ENCODE measurements at regions of chr7 and their contacts with region 1.

Region 1: DNA sequence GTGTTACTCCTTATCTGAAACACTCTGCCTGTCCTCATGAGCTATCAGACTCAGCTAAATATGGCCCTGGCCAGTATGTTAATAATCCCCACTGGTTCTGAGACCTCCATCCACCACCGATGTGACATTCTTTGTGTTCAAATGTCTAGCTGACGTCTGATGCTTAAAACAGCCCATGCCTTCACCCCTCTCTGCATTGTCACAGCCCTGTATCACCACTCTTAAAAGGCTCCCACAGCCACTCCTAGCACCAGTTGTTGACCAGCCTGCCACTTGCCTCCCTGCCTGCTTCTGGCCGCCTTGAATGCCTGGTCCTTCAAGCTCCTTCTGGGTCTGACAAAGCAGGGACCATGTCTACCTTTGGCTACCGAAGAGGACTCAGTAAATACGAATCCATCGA is at the start of gene LMOD2:
- DNase-seq: no peak
- H3K4me3 ChIP-seq: no peak within 1 kb of the TSS
- H3K27ac ChIP-seq: no peak within 1 kb of the TSS
- H3K4me1 ChIP-seq: peaks cover 4% of the 10 kb centered on the region
- H3K27me3 ChIP-seq: peaks cover 0 to 2% of the 10 kb centered on the region in 2 experiments
- CTCF ChIP-seq: no peak
- POLR2A ChIP-seq: no peak
- total RNA-seq, gene LMOD2: not detected in 2 replicates

Region 2: GRCh38 chr7:123674399-123675180 is 19.0 kb after region 1 on chr7:
- CTCF ChIA-PET with region 1: interaction called, 5 read pairs
- POLR2A ChIA-PET with region 1: no interaction called
- dilution Hi-C with region 1: no loop called
- intact Hi-C with region 1: loop called (anchors 2 kb)
- DNase-seq: no peak
- H3K4me3 ChIP-seq: no peak overlapping the region
- H3K27ac ChIP-seq: no peak overlapping the region
- H3K4me1 ChIP-seq: no peaks in the 10 kb centered on the region
- H3K27me3 ChIP-seq: no peaks in the 10 kb centered on the region
- CTCF ChIP-seq: no peak
- POLR2A ChIP-seq: no peak

Region 3: DNA sequence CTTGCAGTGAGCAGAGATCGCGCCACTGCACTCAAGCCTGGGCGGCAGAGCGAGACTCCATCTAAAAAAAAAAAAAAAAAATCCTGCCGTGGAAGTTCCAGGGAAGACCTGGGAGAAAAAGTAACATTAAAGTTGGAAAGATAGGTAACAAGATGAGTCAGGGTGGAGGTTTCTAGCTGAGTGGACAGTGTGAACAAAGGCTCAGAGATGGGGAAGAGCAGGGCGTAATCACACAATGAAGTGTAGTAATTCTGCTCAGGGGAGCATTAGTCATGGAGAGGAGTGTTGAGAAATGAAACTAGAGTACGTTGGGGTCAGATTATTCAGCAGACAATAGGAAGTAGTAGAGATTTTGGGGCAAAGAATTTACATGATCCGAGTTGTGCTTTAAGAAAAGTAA is 114.8 kb after region 1 on chr7:
- CTCF ChIA-PET with region 1: no interaction called
- POLR2A ChIA-PET with region 1: no interaction called
- dilution Hi-C with region 1: no loop called
- intact Hi-C with region 1: no loop called
- DNase-seq: no peak
- H3K4me3 ChIP-seq: no peak overlapping the region
- H3K27ac ChIP-seq: no peak overlapping the region
- H3K4me1 ChIP-seq: peaks cover 5% of the 10 kb centered on the region
- H3K27me3 ChIP-seq: no peaks in the 10 kb centered on the region
- CTCF ChIP-seq: no peak
- POLR2A ChIP-seq: no peak